ENCODE measurements at regions of chr10 and their contacts with region 1.

Region 1: GRCh38 chr10:55813451-55814170 is 547.4 kb downstream of the ZWINT start:
- DNase-seq: no peak
- H3K4me3 ChIP-seq: no peak overlapping the region
- H3K27ac ChIP-seq: no peak overlapping the region
- H3K4me1 ChIP-seq: no peaks in the 10 kb centered on the region
- H3K27me3 ChIP-seq: no peaks in the 10 kb centered on the region
- CTCF ChIP-seq: no peak

Region 2: DNA sequence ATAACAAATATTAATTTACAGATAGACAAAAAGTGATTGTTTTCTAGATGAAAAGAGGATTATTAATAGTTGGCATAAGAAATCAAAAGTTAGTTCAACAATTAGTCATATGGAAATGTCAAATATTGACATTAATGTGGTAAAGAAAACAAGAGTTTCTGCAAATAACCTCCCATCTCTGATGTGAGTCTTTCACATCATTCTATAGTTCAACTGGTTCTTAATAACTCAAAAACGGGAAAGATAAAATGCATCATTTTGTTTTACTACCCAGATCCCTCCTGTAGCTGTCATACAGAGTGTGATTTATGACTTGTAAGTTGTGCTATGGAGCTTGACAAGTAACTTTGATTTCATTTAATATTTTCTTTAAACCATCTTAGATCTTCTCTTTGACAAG is 47.4 kb before region 1 on chr10:
- CTCF ChIA-PET with region 1: no interaction called
- POLR2A ChIA-PET with region 1: no interaction called
- intact Hi-C with region 1: no loop called
- DNase-seq: no peak
- H3K4me3 ChIP-seq: no peak overlapping the region
- H3K27ac ChIP-seq: no peak overlapping the region
- H3K4me1 ChIP-seq: no peaks in the 10 kb centered on the region
- H3K27me3 ChIP-seq: no peaks in the 10 kb centered on the region
- CTCF ChIP-seq: no peak

Region 3: DNA sequence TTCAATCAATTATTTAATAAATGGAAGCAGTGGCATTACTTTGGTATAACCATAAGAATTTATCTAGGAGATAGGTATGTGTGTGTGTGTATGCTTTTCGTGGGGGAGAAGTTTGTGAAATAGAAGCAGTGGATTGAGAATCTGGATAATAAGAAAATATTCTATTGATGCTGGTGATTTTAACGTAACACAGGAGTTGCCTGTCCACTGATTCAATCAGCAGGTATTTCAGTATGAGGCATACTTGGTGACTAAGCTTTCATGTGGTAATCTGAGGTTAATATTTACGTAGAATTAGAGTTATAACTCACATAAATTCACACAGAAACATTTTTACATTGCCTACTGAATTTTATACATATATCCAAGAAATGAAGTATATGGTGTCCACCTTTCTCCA is 20.6 kb before region 1 on chr10:
- CTCF ChIA-PET with region 1: no interaction called
- POLR2A ChIA-PET with region 1: no interaction called
- intact Hi-C with region 1: loop called (anchors 1 kb)
- DNase-seq: peak in 1 of 2 experiments; percentile 45
- H3K4me3 ChIP-seq: no peak overlapping the region
- H3K27ac ChIP-seq: no peak overlapping the region
- H3K4me1 ChIP-seq: no peaks in the 10 kb centered on the region
- H3K27me3 ChIP-seq: no peaks in the 10 kb centered on the region
- CTCF ChIP-seq: no peak

Measured in PC-9 (cell line).